WTC11 (cell line): ENCODE measurements at regions of chr1 and their contacts with region 1.

Region 1: GRCh38 chr1:196344453-196344852 is 263.8 kb downstream of the KCNT2 start:
- DNase-seq: no peak
- ATAC-seq: peak; percentile 44
- H3K4me3 Mint-ChIP-seq: no peak overlapping the region
- H3K27ac Mint-ChIP-seq: peak overlapping the region; percentile 46
- H3K4me1 Mint-ChIP-seq: peaks cover 38% of the 10 kb centered on the region
- H3K27me3 Mint-ChIP-seq: no peaks in the 10 kb centered on the region
- CTCF ChIP-seq: no peak

Region 2: DNA sequence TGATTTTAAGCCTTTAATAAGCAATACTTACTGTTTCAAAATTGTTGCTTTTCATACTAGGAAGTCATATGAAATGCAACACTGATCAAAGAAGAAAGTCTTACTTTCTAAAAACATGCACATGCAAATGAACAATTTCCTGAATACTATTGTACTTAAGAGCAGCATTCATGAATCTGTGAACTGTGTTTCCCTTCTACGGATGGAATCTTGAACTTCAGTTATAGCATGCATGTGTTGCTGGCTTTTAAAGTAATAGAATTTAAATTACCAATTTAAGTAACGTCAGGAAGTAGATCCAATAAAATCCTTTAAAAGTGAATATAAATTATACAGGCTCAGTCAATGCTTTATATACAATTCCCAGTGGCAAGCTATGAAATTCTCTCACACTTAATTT is 85.1 kb before region 1 on chr1:
- CTCF ChIA-PET with region 1: no interaction called
- POLR2A ChIA-PET with region 1: no interaction called
- DNase-seq: no peak
- ATAC-seq: no peak
- H3K4me3 Mint-ChIP-seq: no peak overlapping the region
- H3K27ac Mint-ChIP-seq: no peak overlapping the region
- H3K4me1 Mint-ChIP-seq: 0 out of 2 replicates have a peak, but pooled peaks cover 3% of the 10 kb centered on the region
- H3K27me3 Mint-ChIP-seq: no peaks in the 10 kb centered on the region
- CTCF ChIP-seq: no peak

Region 3: DNA sequence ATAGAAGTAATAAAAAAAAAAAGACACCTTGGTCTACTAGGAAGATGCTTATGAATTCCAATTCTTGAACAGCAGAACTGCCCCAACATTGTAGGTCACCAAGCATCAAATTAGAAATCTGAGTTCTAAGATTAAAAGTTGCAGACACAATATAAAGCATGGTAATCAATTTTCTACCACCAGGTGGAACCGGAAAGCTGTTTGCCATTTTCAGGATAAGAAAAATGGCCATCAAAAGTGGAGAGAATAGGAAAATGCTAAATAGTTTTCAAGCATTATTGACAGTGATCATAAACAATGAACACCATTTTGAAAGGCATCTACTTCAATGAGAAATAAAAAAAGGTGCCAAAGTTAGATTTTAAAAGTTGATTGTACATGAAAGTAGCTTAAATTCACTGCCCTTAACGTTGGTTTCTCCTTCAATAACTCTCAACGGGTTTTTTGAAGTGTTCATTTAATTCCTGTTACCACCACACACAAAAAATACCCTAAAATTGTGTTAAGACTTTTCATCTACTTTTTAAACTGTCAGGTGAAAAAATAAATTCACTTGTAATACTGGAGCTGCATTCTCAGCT is 10.8 kb after region 1 on chr1:
- CTCF ChIA-PET with region 1: interaction called, 11 read pairs
- POLR2A ChIA-PET with region 1: no interaction called
- DNase-seq: no peak
- ATAC-seq: no peak
- H3K4me3 Mint-ChIP-seq: no peak overlapping the region
- H3K27ac Mint-ChIP-seq: no peak overlapping the region
- H3K4me1 Mint-ChIP-seq: peaks cover 12% of the 10 kb centered on the region
- H3K27me3 Mint-ChIP-seq: no peaks in the 10 kb centered on the region
- CTCF ChIP-seq: no peak

Region 4: DNA sequence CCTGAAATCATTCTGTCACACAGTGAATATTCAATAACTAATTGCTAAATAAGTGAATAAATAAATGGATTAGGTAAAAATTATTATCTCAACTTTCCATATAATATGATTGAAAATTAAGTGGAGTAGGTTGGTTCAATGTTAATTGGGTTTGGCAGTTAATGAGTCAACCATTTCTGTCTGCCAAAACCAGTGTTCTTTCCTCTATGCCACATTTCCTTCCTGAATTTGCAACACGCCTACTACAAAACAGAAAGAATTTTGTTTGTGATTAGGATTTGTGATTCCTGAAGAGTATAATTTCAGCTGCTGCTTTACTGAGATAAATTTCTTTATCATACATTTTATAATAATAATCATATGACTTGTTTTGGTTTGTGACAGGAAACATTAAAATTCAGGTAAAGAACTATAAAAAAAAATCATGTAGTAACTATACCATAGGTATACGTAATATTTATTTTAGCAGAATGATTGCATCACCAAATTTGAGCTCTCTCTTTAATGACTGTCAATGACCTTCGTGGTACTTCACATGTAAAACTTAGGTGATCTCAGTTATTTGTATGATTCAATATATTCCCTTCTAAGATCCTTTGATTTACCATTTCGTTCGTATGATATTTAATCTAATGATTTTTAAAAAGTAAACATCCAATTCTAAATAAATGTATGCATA is 22.5 kb after region 1 on chr1:
- CTCF ChIA-PET with region 1: no interaction called
- POLR2A ChIA-PET with region 1: no interaction called
- DNase-seq: no peak
- ATAC-seq: no peak
- H3K4me3 Mint-ChIP-seq: no peak overlapping the region
- H3K27ac Mint-ChIP-seq: no peak overlapping the region
- H3K4me1 Mint-ChIP-seq: peaks cover 41% of the 10 kb centered on the region
- H3K27me3 Mint-ChIP-seq: no peaks in the 10 kb centered on the region
- CTCF ChIP-seq: no peak

Region 5: GRCh38 chr1:196660852-196661251 is 316.4 kb after region 1 on chr1:
- CTCF ChIA-PET with region 1: interaction called, 4 read pairs
- POLR2A ChIA-PET with region 1: interaction called, 11 read pairs
- DNase-seq: no peak
- ATAC-seq: peak; percentile 38; the same call in 1 of the 2 replicates
- H3K4me3 Mint-ChIP-seq: no peak overlapping the region
- H3K27ac Mint-ChIP-seq: no peak overlapping the region
- H3K4me1 Mint-ChIP-seq: no peaks in the 10 kb centered on the region
- H3K27me3 Mint-ChIP-seq: no peaks in the 10 kb centered on the region
- CTCF ChIP-seq: no peak; the same call in 1 of the 2 replicates